ENCODE measurements at regions of chr12 and their contacts with region 1.

Region 1: GRCh38 chr12:108337235-108338223 is 1.6 kb downstream of the CMKLR1 start:
- DNase-seq: peak in 1 of 2 donors; percentile 73
- H3K4me3 ChIP-seq: peak overlapping the region; percentile 48 to 59
- H3K27ac ChIP-seq: peak overlapping the region; percentile 88 to 96
- H3K4me1 ChIP-seq: peaks cover 21 to 63% of the 10 kb centered on the region in 2 donors
- H3K27me3 ChIP-seq: no peaks in the 10 kb centered on the region
- CTCF ChIP-seq: peak; percentile 44 to 61 (median 51)

Region 2: DNA sequence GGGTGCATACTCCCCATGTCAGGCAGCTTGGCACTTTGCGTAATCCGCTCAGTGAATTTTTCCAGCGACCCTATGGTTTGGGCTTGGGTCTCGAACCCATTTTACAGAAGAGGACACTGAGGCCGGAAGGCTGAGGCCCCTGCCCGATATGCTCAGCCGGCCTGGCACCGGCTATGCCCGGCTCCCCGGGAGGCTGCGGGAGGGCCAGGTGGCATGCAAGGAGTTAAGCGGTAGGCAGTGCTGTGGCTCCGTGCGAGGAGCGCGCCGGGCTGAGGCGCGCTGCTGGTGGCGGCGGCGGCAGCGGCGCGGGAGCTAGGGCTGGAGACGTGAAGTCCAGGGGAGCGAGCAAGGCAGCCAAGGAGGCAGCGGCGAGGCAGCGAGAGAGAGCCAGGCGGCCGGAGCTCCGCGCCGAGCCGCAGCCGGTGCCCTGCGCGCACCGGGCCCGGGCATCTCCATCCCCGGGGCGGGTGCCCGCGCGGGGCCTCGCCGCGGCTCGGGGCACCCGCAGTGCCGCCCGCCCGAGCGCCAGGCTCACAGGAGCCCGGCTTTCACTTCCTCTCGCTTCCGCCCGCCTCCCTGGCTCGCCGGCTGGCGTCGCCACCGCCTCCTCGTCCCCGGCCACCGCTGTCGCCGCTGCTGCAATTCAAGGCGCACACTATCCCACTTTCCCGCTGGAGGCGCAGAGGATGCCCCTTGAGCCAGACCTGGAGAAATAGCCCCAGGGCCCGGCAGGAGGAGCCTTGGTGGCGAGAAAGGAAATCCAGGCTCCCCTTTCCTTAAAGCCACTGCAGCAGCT is 208.3 kb before region 1 on chr12 and contains the start of gene WSCD2:
- intact Hi-C with region 1: loop called (anchors 10 kb)
- DNase-seq: peak; percentile 12 to 80
- H3K4me3 ChIP-seq: peak within 1 kb of the TSS; percentile 56 to 82
- H3K27ac ChIP-seq: peak within 1 kb of the TSS; percentile 81
- H3K4me1 ChIP-seq: peaks cover 10% of the 10 kb centered on the region in 2 donors
- H3K27me3 ChIP-seq: no peaks in the 10 kb centered on the region
- CTCF ChIP-seq: peak in 2 of 3 experiments; percentile 49 to 50
- total RNA-seq, gene WSCD2: 3.5 TPM

Region 3: GRCh38 chr12:108193917-108194316 is 143.6 kb before region 1 on chr12:
- intact Hi-C with region 1: no loop called
- DNase-seq: no peak
- H3K4me3 ChIP-seq: no peak overlapping the region
- H3K27ac ChIP-seq: no peak overlapping the region
- H3K4me1 ChIP-seq: peaks cover 0 to 5% of the 10 kb centered on the region in 2 donors
- H3K27me3 ChIP-seq: no peaks in the 10 kb centered on the region
- CTCF ChIP-seq: peak; percentile 49 to 75 (median 60)

Region 4: GRCh38 chr12:108214486-108214885 is 123.0 kb before region 1 on chr12:
- intact Hi-C with region 1: no loop called
- DNase-seq: no peak
- H3K4me3 ChIP-seq: no peak overlapping the region
- H3K27ac ChIP-seq: no peak overlapping the region
- H3K4me1 ChIP-seq: no peaks in the 10 kb centered on the region
- H3K27me3 ChIP-seq: no peaks in the 10 kb centered on the region
- CTCF ChIP-seq: no peak

Region 5: DNA sequence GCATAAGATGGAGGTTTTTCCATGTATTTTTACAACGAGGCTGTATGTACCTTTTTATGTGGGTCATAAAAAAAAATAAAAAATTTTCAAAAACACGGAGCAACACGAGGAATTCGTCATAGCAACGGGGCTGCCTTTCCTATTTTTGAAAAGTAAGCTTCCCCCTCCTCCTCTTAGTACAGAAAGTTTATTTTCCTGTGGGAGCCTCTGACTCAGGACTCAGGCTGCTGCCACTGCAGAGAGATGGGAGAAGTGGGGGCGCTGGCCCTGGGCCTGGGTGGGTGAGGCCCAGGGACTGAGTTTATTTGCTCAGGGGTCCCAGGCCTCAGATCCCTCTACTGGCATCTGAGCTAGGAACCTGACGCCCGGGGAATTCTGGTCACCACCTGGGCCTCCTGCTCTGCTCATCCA is 11.8 kb after region 1 on chr12:
- intact Hi-C with region 1: loop called (anchors 1 kb)
- DNase-seq: peak; percentile 16 to 83
- H3K4me3 ChIP-seq: peak overlapping the region in 1 of 2 donors; percentile 5
- H3K27ac ChIP-seq: peak overlapping the region; percentile 77 to 82
- H3K4me1 ChIP-seq: peaks cover 3 to 9% of the 10 kb centered on the region in 2 donors
- H3K27me3 ChIP-seq: no peaks in the 10 kb centered on the region
- CTCF ChIP-seq: no peak

Region 6: GRCh38 chr12:108371801-108372344 is 34.3 kb after region 1 on chr12:
- intact Hi-C with region 1: loop called (anchors 2 kb)
- DNase-seq: peak in 1 of 2 donors; percentile 80
- H3K4me3 ChIP-seq: no peak overlapping the region
- H3K27ac ChIP-seq: peak overlapping the region; percentile 41 to 66
- H3K4me1 ChIP-seq: peaks cover 6 to 11% of the 10 kb centered on the region in 2 donors
- H3K27me3 ChIP-seq: no peaks in the 10 kb centered on the region
- CTCF ChIP-seq: no peak

Region 7: GRCh38 chr12:108394196-108394595 is 56.7 kb after region 1 on chr12:
- intact Hi-C with region 1: no loop called
- DNase-seq: peak in 1 of 2 donors; percentile 64
- H3K4me3 ChIP-seq: no peak overlapping the region
- H3K27ac ChIP-seq: peak overlapping the region; percentile 59 to 68
- H3K4me1 ChIP-seq: peaks cover 6 to 7% of the 10 kb centered on the region in 2 donors
- H3K27me3 ChIP-seq: no peaks in the 10 kb centered on the region
- CTCF ChIP-seq: no peak

Region 8: DNA sequence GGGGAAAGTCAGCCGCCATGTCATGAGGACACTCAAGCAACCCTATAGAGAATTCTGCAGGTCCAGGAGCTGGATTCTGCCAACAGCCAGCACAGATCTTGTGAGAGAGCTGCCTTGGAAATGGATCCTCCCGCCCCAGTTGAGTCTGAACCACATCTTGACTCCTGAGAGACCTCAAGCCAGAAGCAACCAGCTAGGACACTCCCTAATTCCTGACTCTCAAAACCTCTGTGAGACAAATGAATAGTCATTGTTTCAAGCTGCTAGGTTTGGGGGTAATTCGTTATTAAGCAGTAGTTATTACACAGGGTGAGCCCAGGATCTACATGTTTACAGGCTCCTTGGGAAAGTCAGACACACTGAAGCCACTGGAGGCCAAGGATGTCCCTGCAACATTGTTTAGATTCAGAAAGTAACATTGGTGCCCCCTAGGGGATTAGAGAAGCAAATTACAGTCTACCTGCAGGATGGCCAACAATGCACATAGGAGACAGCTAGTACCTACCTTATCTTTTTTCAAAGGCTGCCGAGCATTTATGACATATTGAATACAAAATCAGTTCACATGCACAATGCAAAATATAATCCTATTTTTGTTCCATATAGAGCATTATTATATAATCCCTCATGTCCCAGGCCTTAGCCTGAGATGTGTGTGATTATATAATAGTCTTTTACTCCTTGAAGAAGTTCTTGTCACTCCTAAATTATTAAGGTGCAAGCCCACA is 119.6 kb after region 1 on chr12:
- intact Hi-C with region 1: loop called (anchors 1 kb)
- DNase-seq: no peak
- H3K4me3 ChIP-seq: no peak overlapping the region
- H3K27ac ChIP-seq: no peak overlapping the region
- H3K4me1 ChIP-seq: no peaks in the 10 kb centered on the region
- H3K27me3 ChIP-seq: no peaks in the 10 kb centered on the region
- CTCF ChIP-seq: peak; percentile 47 to 77 (median 66)

Region 9: GRCh38 chr12:108589028-108589839 is 251.7 kb after region 1 on chr12:
- intact Hi-C with region 1: no loop called
- DNase-seq: no peak
- H3K4me3 ChIP-seq: no peak overlapping the region
- H3K27ac ChIP-seq: no peak overlapping the region
- H3K4me1 ChIP-seq: no peaks in the 10 kb centered on the region
- H3K27me3 ChIP-seq: no peaks in the 10 kb centered on the region
- CTCF ChIP-seq: no peak

Measured in ascending aorta (tissue), 2 donors.